ENCODE measurements at regions of chr7 and their contacts with region 1.

Region 1: DNA sequence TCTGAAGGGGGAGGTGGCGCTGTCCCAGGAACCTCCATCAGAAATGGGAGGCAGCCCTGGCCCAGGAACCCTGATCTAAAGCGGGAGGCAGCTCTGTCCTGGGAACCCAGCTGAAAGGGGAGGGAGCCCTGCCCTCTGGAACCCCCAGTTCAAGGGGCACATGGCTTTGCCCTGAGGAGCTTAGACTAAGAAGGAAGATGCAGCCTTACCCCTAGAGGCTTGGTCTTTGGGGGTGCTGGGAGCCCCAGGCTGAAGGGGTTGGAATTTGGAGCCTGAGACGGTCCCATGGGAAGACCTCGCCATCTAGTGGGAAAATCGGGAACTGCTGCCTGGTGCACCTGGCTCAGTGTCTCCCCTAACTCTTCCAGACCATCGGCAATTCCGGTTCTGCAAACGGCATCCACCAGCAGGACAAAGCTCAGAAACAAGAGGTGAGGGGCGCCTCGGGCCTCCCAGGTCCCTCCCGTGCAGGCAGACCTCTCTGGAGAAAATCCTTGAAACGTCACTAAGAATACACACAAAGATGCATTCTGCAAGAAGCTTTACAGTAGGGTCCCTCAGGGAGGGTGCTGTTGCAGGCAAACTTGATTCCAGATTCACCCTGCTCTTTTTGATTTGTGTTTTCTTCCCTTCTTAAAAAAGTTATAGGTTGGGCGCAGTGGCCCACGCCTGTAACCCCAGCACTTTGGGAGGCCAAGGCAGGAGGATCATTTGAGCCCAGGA is 52.4 kb upstream of the GTF2IRD1 start:
- DNase-seq: peak; percentile 77
- H3K4me3 ChIP-seq: no peak overlapping the region
- H3K27ac ChIP-seq: no peak overlapping the region
- H3K4me1 ChIP-seq: no peaks in the 10 kb centered on the region
- CTCF ChIP-seq: peak; percentile 98

Region 2: DNA sequence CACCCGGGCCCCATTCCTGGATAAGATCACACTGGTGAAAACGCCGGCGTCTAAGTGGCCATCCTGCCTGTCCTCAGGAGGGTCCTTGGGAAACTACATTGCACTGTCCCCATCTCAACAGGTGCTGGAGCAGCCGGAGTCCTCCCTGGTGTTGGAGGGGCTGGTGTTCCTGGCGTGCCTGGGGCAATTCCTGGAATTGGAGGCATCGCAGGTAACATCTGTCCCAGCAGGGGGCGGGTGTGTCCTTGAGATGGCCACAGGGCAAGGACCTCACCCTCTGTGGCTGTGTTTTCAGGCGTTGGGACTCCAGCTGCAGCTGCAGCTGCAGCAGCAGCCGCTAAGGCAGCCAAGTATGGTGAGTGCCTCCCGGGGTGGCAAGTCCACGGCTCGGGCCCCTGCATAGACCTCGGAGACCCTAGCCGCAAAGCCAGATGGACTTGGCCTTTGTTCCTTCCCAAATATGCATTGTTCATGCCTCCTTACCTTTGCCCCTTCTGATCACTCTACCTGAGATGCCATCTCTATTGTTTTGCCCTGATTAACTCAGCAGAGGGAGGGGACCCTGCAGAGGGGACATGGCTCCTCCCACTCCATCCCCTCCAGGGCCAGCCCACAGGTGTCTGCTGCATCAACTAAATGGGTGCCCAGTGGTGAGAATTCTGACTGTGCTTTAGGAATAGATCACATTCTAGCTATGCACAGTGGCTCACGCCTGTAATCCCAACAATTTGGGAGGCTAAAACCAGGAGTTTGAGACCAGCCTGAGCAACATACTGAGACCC is 349.5 kb before region 1 on chr7:
- CTCF ChIA-PET with region 1: no interaction called
- POLR2A ChIA-PET with region 1: no interaction called
- intact Hi-C with region 1: loop called (anchors 5 kb)
- DNase-seq: peak; percentile 52
- H3K4me3 ChIP-seq: no peak overlapping the region
- H3K27ac ChIP-seq: no peak overlapping the region
- H3K4me1 ChIP-seq: no peaks in the 10 kb centered on the region
- CTCF ChIP-seq: peak; percentile 56; the same call in 1 of the 2 replicates

Region 3: GRCh38 chr7:74061840-74062539 is 339.3 kb before region 1 on chr7:
- CTCF ChIA-PET with region 1: no interaction called
- POLR2A ChIA-PET with region 1: no interaction called
- intact Hi-C with region 1: loop called (anchors 1 kb)
- DNase-seq: peak; percentile 42
- H3K4me3 ChIP-seq: no peak overlapping the region
- H3K27ac ChIP-seq: no peak overlapping the region
- H3K4me1 ChIP-seq: peaks cover 6% of the 10 kb centered on the region
- CTCF ChIP-seq: no peak

Region 4: GRCh38 chr7:74206589-74207120 is 194.6 kb before region 1 on chr7:
- CTCF ChIA-PET with region 1: interaction called, 27 read pairs
- POLR2A ChIA-PET with region 1: interaction called, 8 read pairs
- intact Hi-C with region 1: loop called (anchors 1 kb)
- DNase-seq: peak; percentile 80
- H3K4me3 ChIP-seq: no peak overlapping the region
- H3K27ac ChIP-seq: no peak overlapping the region
- H3K4me1 ChIP-seq: peaks cover 49% of the 10 kb centered on the region
- CTCF ChIP-seq: peak; percentile 99

Region 5: GRCh38 chr7:74275401-74275881 is 125.9 kb before region 1 on chr7:
- CTCF ChIA-PET with region 1: interaction called, 9 read pairs
- POLR2A ChIA-PET with region 1: interaction called, 8 read pairs
- intact Hi-C with region 1: loop called (anchors 2 kb)
- DNase-seq: peak; percentile 58
- H3K4me3 ChIP-seq: no peak overlapping the region
- H3K27ac ChIP-seq: peak overlapping the region; percentile 23
- H3K4me1 ChIP-seq: peaks cover 58% of the 10 kb centered on the region
- CTCF ChIP-seq: peak; percentile 75

Region 6: GRCh38 chr7:74289018-74289658 is 112.2 kb before region 1 on chr7 and contains the start of gene CLIP2:
- CTCF ChIA-PET with region 1: no interaction called
- POLR2A ChIA-PET with region 1: no interaction called
- intact Hi-C with region 1: loop called (anchors 5 kb)
- DNase-seq: peak; percentile 83
- H3K4me3 ChIP-seq: peak within 1 kb of the TSS; percentile 74
- H3K27ac ChIP-seq: no peak within 1 kb of the TSS
- H3K4me1 ChIP-seq: peaks cover 38% of the 10 kb centered on the region
- CTCF ChIP-seq: no peak
- total RNA-seq, gene CLIP2: 3.6 and 4.2 TPM in 2 replicates

Region 7: DNA sequence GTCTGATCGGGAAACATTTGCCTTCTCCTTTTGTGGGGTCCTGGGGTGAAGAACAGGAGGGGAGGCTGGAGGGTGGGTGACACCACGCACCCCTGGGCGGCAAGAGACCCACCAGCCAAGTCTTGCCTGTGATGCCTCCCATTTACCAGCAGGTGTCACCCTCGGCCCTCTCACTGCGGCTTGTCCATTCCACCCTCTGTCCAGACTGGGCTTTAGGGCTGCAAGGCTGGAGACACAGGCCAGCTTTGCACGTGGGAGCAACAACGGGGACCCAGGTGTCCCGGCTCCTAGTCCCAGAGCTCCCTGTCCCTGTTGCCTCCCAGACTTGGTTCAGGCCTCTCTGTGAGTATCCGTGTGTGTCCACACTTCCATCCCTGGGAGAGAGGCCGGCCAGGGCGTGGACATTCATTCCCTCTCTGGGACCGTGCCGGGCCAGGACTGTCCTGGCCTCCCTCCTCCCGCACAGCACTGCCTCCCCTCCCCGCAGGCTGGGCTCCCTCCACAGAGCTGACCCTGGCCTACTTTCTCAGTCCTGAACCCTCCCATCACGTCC is 16.2 kb after region 1 on chr7:
- CTCF ChIA-PET with region 1: interaction called, 11 read pairs
- POLR2A ChIA-PET with region 1: no interaction called
- intact Hi-C with region 1: no loop called
- DNase-seq: peak; percentile 62
- H3K4me3 ChIP-seq: no peak overlapping the region
- H3K27ac ChIP-seq: no peak overlapping the region
- H3K4me1 ChIP-seq: no peaks in the 10 kb centered on the region
- CTCF ChIP-seq: peak; percentile 95

Region 8: GRCh38 chr7:74430961-74431471 is 29.7 kb after region 1 on chr7:
- CTCF ChIA-PET with region 1: no interaction called
- POLR2A ChIA-PET with region 1: no interaction called
- intact Hi-C with region 1: no loop called
- DNase-seq: no peak
- H3K4me3 ChIP-seq: no peak overlapping the region
- H3K27ac ChIP-seq: no peak overlapping the region
- H3K4me1 ChIP-seq: no peaks in the 10 kb centered on the region
- CTCF ChIP-seq: no peak

Measured in OCI-LY7 (cell line).